ENCODE measurements at regions of chrX and their contacts with region 1.

Region 1: DNA sequence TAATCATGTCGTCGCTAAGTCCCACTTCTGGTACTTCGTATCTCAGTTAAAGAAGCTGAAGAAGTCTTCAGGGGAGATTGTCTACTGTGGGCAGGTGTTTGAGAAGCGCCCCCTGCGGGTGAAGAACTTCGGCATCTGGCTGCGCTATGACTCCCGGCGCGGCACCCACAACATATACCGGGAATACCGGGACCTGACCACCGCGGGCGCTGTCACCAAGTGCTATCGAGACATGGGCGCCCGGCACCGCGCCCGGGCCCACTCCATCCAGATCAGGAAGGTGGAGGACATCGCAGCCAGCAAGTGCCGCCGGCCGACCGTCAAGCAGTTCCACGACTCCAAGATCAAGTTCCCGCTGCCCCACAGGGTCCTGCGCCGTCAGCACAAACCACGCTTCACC is 11.3 kb downstream of the PNCK start:
- DNase-seq: peak; percentile 39 to 78
- ATAC-seq: no peak
- H3K4me3 ChIP-seq: no peak overlapping the region
- H3K4me3 Mint-ChIP-seq: no peak overlapping the region
- H3K27ac ChIP-seq: no peak overlapping the region
- H3K27ac Mint-ChIP-seq: no peak overlapping the region
- H3K4me1 ChIP-seq: peaks cover 6% of the 10 kb centered on the region
- H3K4me1 Mint-ChIP-seq: no peaks in the 10 kb centered on the region
- H3K27me3 ChIP-seq: no peaks in the 10 kb centered on the region
- H3K27me3 Mint-ChIP-seq: peaks cover 21 to 35% of the 10 kb centered on the region in 2 donors
- CTCF ChIP-seq: no peak

Region 2: DNA sequence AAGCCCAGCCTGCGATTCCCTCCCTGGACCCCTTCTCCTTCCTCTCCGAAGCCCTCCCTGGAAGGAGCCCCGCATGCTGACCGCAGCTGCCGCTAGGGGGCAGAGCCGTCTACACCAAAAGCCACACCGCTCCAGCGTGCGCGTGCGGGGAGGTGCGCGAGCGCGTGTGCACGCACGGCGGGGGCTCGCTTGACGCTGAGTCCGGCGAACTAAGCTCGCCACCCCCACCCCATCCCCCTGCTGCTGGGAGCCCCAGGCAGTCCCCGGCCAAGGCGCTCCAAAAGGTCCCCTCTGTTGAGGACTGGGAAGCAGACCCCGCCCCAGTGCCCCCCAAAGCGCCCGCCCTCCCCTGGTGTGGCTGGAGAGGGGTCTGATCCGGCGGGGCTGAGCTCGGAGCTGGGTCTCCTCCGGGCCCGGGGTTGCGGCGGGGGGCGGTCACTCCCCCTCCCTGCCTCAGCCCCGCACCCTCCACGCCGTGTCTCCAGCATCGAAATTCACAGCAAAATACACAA is 52.3 kb before region 1 on chrX:
- intact Hi-C with region 1: loop called (anchors 5 kb)
- DNase-seq: peak; percentile 68 to 88
- ATAC-seq: peak; percentile 91 to 93 (median 93)
- H3K4me3 ChIP-seq: peak overlapping the region; percentile 56
- H3K4me3 Mint-ChIP-seq: peak overlapping the region; percentile 87
- H3K27ac ChIP-seq: peak overlapping the region; percentile 30
- H3K27ac Mint-ChIP-seq: peak overlapping the region in 1 of 2 donors; percentile 74
- H3K4me1 ChIP-seq: peaks cover 11% of the 10 kb centered on the region
- H3K4me1 Mint-ChIP-seq: peaks cover 0 to 4% of the 10 kb centered on the region in 2 donors
- H3K27me3 ChIP-seq: no peaks in the 10 kb centered on the region
- H3K27me3 Mint-ChIP-seq: peaks cover 9 to 31% of the 10 kb centered on the region in 2 donors
- CTCF ChIP-seq: peak; percentile 60

Region 3: GRCh38 chrX:153862369-153863250 is 200.3 kb after region 1 on chrX:
- intact Hi-C with region 1: no loop called
- DNase-seq: no peak
- ATAC-seq: no peak
- H3K4me3 ChIP-seq: no peak overlapping the region
- H3K4me3 Mint-ChIP-seq: no peak overlapping the region
- H3K27ac ChIP-seq: no peak overlapping the region
- H3K27ac Mint-ChIP-seq: no peak overlapping the region
- H3K4me1 ChIP-seq: peaks cover 4% of the 10 kb centered on the region
- H3K4me1 Mint-ChIP-seq: peaks cover 2 to 4% of the 10 kb centered on the region in 2 donors
- H3K27me3 ChIP-seq: no peaks in the 10 kb centered on the region
- H3K27me3 Mint-ChIP-seq: peaks cover 3 to 6% of the 10 kb centered on the region in 2 donors
- CTCF ChIP-seq: no peak

Measured in natural killer cell (primary cell).